ENCODE measurements at regions of chr22 and their contacts with region 1.

Region 1: DNA sequence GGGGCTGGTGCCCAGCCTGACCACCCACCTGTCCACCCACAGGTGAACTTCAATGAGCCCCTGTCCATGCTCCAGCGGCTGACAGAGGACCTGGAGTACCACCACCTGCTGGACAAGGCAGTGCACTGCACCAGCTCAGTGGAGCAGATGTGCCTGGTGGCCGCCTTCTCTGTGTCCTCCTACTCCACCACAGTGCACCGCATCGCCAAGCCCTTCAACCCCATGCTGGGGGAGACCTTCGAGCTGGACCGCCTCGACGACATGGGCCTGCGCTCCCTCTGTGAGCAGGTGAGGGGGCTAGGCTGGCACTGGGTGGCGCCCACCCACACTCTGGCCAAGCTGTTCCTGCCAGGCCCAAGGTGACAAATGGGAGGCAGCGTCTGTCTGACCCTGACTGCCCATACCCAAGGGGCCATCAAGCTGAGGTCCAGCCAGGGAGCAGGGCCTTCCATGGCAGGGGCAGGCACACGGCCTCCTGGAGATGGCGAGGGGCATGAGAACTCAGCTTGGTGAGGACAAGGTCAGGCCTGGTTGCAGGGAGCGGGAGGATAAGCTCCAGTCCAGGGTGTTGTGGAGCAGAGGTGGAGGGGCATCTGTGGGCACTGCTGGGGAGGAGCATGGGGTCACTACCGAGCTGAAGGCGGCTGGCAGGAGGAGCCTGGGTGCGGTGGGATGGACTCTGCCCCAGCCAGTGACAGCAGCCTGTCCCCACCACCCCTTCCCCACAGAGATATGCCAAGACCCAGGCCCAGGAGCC is 77.7 kb downstream of the MORC2 start:
- DNase-seq: peak in 1 of 2 experiments; percentile 82
- H3K4me3 ChIP-seq: no peak overlapping the region
- H3K27ac ChIP-seq: no peak overlapping the region
- H3K4me1 ChIP-seq: peaks cover 0 to 4% (median 4%) of the 10 kb centered on the region in 4 experiments; a peak in 5 of 7 replicates
- H3K27me3 ChIP-seq: no peaks in the 10 kb centered on the region
- CTCF ChIP-seq: peak; percentile 86 to 99 (median 93)
- EP300 ChIP-seq: no peak
- POLR2A ChIP-seq: no peak
- RAD21 ChIP-seq: peak; percentile 72 to 74

Region 2: GRCh38 chr22:30763815-30764686 is 126.8 kb before region 1 on chr22:
- CTCF ChIA-PET with region 1: interaction called, 47 read pairs
- POLR2A ChIA-PET with region 1: interaction called, 4 read pairs
- DNase-seq: peak; percentile 21 to 61
- H3K4me3 ChIP-seq: no peak overlapping the region
- H3K27ac ChIP-seq: no peak overlapping the region
- H3K4me1 ChIP-seq: peaks cover 0 to 3% (median 2%) of the 10 kb centered on the region in 4 experiments; a peak in 4 of 7 replicates
- H3K27me3 ChIP-seq: no peaks in the 10 kb centered on the region
- CTCF ChIP-seq: peak; percentile 23 to 86 (median 80)
- EP300 ChIP-seq: no peak
- POLR2A ChIP-seq: no peak
- RAD21 ChIP-seq: peak; percentile 92 to 93

Region 3: DNA sequence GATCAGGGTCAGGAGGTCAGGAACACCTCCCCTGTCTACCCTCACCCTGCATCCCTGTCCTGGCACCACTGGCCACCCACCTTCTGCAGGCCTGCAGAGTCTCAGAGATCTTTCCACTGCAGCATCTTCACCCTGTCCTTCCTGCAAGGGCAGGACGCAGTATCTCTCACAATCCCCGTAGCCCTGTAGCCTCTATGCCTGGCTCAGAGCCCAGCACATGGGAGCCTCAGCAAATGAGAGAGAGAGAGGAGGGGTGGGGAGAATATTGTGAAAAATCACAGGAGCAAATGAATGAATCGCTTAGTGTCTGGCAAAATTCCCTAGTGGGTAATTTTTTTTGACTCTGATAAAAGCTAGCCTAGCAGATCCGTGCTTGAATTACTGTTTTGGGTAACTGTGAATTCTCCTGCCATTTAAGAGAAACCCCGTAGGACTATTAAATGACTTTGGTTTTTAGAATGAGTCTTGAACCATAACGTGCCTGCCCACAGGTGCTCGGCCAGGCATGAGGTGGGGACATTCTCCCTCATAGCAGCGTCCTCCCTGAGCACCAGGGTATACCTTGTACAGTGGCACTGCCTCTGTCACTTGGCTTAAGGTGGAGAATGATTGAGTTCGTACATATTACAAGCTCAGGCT is 13.8 kb before region 1 on chr22:
- CTCF ChIA-PET with region 1: interaction called, 73 read pairs
- POLR2A ChIA-PET with region 1: interaction called, 3 read pairs
- DNase-seq: no peak
- H3K4me3 ChIP-seq: no peak overlapping the region
- H3K27ac ChIP-seq: no peak overlapping the region
- H3K4me1 ChIP-seq: peaks cover 0 to 7% (median under 1%) of the 10 kb centered on the region in 4 experiments; a peak in 4 of 7 replicates
- H3K27me3 ChIP-seq: no peaks in the 10 kb centered on the region
- CTCF ChIP-seq: no peak
- EP300 ChIP-seq: no peak
- POLR2A ChIP-seq: no peak
- RAD21 ChIP-seq: no peak

Region 4: GRCh38 chr22:30905696-30906341 is 15.0 kb after region 1 on chr22:
- CTCF ChIA-PET with region 1: interaction called, 34 read pairs
- POLR2A ChIA-PET with region 1: interaction called, 3 read pairs
- DNase-seq: peak in 1 of 2 experiments; percentile 42
- H3K4me3 ChIP-seq: no peak overlapping the region
- H3K27ac ChIP-seq: no peak overlapping the region
- H3K4me1 ChIP-seq: no peaks in the 10 kb centered on the region
- H3K27me3 ChIP-seq: no peaks in the 10 kb centered on the region
- CTCF ChIP-seq: no peak
- EP300 ChIP-seq: no peak
- POLR2A ChIP-seq: no peak
- RAD21 ChIP-seq: no peak

Region 5: DNA sequence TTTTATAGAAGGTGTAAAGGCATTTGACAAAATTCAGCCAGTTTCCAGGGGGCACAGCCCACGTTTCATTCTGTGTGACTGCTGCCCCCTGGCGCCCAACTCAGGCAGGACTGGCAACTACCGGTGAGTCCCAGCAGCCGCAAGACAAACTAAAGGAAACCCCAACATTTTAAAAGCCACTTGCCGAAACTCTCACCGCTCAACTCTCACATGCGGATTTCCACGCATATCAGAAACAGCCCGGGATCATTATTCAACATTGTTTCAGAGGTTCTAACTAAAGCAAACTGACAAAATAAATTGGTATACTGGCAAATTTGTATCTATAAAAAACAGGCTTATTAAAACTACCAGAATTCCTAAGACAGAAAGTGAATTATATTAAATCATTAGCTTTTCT is 29.5 kb after region 1 on chr22:
- CTCF ChIA-PET with region 1: interaction called, 44 read pairs
- POLR2A ChIA-PET with region 1: interaction called, 3 read pairs
- DNase-seq: peak; percentile 43 to 97
- H3K4me3 ChIP-seq: no peak overlapping the region
- H3K27ac ChIP-seq: no peak overlapping the region
- H3K4me1 ChIP-seq: no peaks in the 10 kb centered on the region
- H3K27me3 ChIP-seq: no peaks in the 10 kb centered on the region
- CTCF ChIP-seq: peak; percentile 77 to 96 (median 88)
- EP300 ChIP-seq: no peak
- POLR2A ChIP-seq: no peak
- RAD21 ChIP-seq: peak; percentile 79 to 80

Measured in H1 (cell line).